Activated CD4-positive, alpha-beta T cell treated with anti-CD3 and anti-CD28 coated beads, Interleukin-2, amount 10 ng/mL, durations not matched to agents 24 days and 14 days (primary cell): ENCODE measurements at regions of chr7 and their contacts with region 1.

Region 1: DNA sequence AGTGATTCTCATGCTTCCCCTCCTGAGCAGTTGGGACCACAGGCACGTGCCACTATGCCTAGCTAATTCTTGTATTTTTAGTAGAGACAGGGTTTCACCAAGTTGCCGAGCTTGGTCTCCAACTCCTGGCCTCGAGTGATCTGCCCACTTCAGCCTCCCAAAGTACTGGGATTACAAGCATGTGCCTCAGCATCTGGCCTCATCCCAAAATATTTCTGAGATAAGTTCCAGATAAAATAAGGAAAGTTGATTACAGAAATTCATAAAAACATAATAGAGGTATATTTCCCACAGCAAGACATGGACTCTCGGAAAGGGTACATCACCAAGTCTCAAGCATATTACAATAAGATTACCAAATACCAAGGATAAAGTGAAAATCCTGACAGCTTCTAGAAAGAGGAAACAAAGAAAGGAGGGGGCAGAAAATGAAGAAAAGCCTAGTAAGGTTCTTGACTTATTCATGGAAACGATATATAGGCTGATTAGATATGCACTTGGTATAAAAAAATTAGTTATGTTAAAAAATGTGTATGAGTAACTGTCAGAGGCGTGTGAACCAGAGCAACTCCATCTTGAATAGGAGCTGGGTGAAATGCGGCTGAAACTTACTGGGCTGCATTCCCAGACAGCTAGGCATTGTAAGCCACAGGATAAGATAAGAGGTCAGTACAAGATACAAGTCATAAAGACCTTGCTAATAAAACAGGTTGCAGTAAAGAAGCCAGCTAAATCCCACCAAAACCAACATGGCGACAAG is 35.0 kb downstream of the IQUB start:
- DNase-seq: no peak
- H3K4me3 Mint-ChIP-seq: no peak overlapping the region
- H3K27ac Mint-ChIP-seq: no peak overlapping the region
- H3K4me1 Mint-ChIP-seq: no peaks in the 10 kb centered on the region
- H3K27me3 Mint-ChIP-seq: peaks cover 14% of the 10 kb centered on the region

Region 2: GRCh38 chr7:123528265-123528664 is 28.9 kb after region 1 on chr7:
- intact Hi-C with region 1: no loop called
- DNase-seq: no peak
- H3K4me3 Mint-ChIP-seq: no peak overlapping the region
- H3K27ac Mint-ChIP-seq: no peak overlapping the region
- H3K4me1 Mint-ChIP-seq: peaks cover 5% of the 10 kb centered on the region
- H3K27me3 Mint-ChIP-seq: peaks cover 18% of the 10 kb centered on the region

Region 3: DNA sequence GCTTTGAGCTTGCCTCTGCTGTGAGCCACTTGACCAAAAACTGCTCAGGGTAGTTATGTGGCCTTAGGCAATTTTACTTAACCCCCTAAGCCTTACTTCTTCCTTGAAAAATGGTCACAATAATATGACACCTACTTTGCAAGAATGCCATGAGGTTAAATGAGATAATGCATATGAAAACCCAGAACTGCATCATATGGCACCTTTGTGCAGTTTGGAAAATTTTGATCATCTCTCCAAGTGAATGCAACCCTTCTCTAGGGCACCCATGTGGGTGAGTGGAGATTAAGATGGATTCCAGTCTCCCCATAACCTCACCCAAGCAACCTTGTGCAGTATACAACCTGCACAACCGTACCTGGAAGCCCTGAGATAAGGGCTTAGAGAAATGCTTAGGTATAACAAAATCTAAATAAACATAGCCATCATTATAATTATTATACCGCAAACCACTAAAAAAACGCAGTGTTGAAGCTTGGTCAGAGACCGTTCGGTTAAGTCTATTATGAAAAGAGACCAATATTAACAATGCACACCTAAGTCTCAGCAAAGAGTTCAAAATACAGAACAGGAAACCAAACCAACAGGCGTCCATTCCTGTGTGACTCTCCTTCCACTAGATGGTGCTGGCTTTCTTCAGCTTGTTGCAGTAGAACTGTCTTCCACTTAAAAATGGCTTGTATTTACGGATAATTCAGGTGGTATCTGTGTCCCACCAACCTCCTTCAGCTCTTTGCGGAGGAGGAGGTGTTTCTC is 81.2 kb after region 1 on chr7:
- intact Hi-C with region 1: no loop called
- DNase-seq: peak; percentile 63
- H3K4me3 Mint-ChIP-seq: no peak overlapping the region
- H3K27ac Mint-ChIP-seq: no peak overlapping the region
- H3K4me1 Mint-ChIP-seq: peaks cover 2% of the 10 kb centered on the region
- H3K27me3 Mint-ChIP-seq: peaks cover 17% of the 10 kb centered on the region

Region 4: GRCh38 chr7:123635551-123636359 is 136.4 kb after region 1 on chr7:
- intact Hi-C with region 1: no loop called
- DNase-seq: no peak
- H3K4me3 Mint-ChIP-seq: no peak overlapping the region
- H3K27ac Mint-ChIP-seq: no peak overlapping the region
- H3K4me1 Mint-ChIP-seq: no peaks in the 10 kb centered on the region
- H3K27me3 Mint-ChIP-seq: peaks cover 23% of the 10 kb centered on the region

Region 5: GRCh38 chr7:124084024-124084423 is 584.6 kb after region 1 on chr7:
- intact Hi-C with region 1: loop called (anchors 5 kb)
- DNase-seq: no peak
- H3K4me3 Mint-ChIP-seq: no peak overlapping the region
- H3K27ac Mint-ChIP-seq: no peak overlapping the region
- H3K4me1 Mint-ChIP-seq: no peaks in the 10 kb centered on the region
- H3K27me3 Mint-ChIP-seq: no peaks in the 10 kb centered on the region